GM13976 (cell line): ENCODE measurements at regions of chr5 and their contacts with region 1.

Region 1: DNA sequence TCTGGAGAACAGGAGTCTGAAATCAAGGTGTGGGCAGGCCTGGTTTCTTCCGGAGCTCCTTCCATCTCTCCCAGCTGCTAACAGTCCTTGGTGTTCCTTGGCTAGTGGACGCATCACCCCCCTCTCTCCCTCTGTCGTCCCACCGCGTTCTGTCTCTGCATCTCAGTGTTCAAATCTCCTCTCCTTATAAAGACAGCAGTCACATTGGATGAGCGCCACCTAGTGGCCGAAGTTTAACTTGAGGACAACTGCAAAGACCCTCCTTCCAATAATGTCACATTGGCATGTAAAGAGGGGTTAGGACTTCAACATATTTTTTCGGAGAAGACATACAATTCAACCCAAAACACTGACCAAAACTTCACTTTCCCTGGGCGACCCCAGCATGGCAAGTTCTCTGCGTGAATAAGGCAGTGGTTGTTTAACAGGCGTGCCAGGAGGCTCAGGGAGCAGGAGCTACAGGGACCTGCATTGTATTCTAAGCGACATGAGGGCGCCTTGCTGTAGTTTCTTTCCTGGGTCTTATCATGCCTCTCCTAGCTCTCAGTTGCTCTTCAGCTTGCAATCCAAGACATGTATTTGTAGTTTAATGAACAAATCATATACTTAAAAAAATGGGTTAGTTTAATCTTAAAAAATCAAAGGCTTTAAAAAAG is 27.9 kb upstream of the BASP1 start:
- DNase-seq: peak; percentile 55
- CTCF ChIP-seq: peak; percentile 87

Region 2: GRCh38 chr5:16784843-16785791 is 404.4 kb before region 1 on chr5:
- in situ Hi-C with region 1: loop called (anchors 10 kb)
- DNase-seq: no peak
- CTCF ChIP-seq: no peak

Region 3: GRCh38 chr5:17255471-17256021 is 66.0 kb after region 1 on chr5:
- in situ Hi-C with region 1: no loop called
- DNase-seq: no peak
- CTCF ChIP-seq: no peak

Region 4: GRCh38 chr5:18270683-18271338 is 1081.3 kb after region 1 on chr5:
- in situ Hi-C with region 1: no loop called
- DNase-seq: no peak
- CTCF ChIP-seq: no peak